Activated B cell treated with CpG ODN at 0.5 μM for 24 hours (primary cell): ENCODE measurements at regions of chr3 and their contacts with region 1.

Region 1: DNA sequence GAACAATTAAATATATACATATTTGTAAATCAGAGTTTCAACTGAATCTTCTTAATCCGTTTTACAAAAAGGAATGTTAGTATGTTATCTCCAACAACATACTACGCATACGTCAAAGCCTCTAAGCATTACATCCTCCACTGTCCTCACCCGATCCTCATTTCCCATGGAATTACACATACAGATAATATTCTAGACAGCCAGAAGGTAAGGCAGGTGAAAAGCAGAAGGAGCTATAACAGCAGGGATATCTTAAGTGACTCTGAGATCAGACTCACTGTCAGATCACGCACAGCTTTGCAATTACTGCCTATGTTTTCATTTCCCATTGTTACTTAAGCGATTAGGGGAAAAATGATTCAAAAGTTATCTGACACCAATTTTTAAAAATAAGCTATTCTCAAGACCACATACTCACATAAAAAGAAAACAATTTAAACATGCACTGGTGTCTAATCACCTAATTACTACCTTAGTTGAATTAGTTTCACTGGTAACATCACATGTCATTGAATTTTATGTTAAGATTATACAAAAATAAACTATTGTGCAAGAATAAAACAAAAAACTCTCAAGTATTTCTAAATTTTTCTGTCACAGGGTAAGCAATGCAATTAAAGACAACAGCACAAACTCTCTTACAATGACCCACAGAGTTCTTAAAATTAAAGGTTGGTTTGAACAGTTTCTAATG is 92.8 kb downstream of the TBL1XR1 start:
- DNase-seq: no peak
- ATAC-seq: no peak
- H3K4me3 Mint-ChIP-seq: no peak overlapping the region
- H3K27ac Mint-ChIP-seq: no peak overlapping the region
- H3K4me1 Mint-ChIP-seq: peaks cover 60% of the 10 kb centered on the region
- H3K27me3 Mint-ChIP-seq: no peaks in the 10 kb centered on the region
- CTCF ChIP-seq: no peak

Region 2: GRCh38 chr3:176058864-176059263 is 1045.6 kb before region 1 on chr3:
- CTCF ChIA-PET with region 1: no interaction called
- POLR2A ChIA-PET with region 1: no interaction called
- intact Hi-C with region 1: no loop called
- DNase-seq: no peak
- ATAC-seq: no peak
- H3K4me3 Mint-ChIP-seq: no peak overlapping the region
- H3K27ac Mint-ChIP-seq: no peak overlapping the region
- H3K4me1 Mint-ChIP-seq: no peaks in the 10 kb centered on the region
- H3K27me3 Mint-ChIP-seq: no peaks in the 10 kb centered on the region
- CTCF ChIP-seq: no peak

Region 3: DNA sequence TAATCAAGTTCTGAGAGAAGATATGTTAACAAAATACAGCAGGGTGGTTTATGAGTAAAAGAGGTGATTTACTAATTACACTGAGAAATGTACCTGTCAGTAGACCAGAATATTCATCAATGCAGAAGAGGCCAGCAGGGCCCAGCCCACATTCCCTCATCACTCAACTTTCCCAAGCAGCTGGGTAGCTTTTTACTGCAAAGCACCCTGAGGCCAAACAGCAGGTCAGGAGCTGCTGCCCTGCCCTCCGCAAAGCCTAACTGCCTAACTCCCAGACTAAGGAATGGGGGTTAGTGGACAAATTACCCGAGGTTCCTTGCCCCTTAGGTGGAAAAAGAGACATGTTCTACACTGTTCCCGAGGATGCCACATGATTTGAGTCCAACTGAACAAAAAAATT is 15.3 kb before region 1 on chr3:
- CTCF ChIA-PET with region 1: no interaction called
- POLR2A ChIA-PET with region 1: no interaction called
- intact Hi-C with region 1: loop called (anchors 2 kb)
- DNase-seq: no peak
- ATAC-seq: no peak
- H3K4me3 Mint-ChIP-seq: no peak overlapping the region
- H3K27ac Mint-ChIP-seq: peak overlapping the region; percentile 41
- H3K4me1 Mint-ChIP-seq: peaks cover 72% of the 10 kb centered on the region
- H3K27me3 Mint-ChIP-seq: no peaks in the 10 kb centered on the region
- CTCF ChIP-seq: no peak